Transverse colon (tissue), 4 donors: ENCODE measurements at regions of chr1 and their contacts with region 1.

Region 1: DNA sequence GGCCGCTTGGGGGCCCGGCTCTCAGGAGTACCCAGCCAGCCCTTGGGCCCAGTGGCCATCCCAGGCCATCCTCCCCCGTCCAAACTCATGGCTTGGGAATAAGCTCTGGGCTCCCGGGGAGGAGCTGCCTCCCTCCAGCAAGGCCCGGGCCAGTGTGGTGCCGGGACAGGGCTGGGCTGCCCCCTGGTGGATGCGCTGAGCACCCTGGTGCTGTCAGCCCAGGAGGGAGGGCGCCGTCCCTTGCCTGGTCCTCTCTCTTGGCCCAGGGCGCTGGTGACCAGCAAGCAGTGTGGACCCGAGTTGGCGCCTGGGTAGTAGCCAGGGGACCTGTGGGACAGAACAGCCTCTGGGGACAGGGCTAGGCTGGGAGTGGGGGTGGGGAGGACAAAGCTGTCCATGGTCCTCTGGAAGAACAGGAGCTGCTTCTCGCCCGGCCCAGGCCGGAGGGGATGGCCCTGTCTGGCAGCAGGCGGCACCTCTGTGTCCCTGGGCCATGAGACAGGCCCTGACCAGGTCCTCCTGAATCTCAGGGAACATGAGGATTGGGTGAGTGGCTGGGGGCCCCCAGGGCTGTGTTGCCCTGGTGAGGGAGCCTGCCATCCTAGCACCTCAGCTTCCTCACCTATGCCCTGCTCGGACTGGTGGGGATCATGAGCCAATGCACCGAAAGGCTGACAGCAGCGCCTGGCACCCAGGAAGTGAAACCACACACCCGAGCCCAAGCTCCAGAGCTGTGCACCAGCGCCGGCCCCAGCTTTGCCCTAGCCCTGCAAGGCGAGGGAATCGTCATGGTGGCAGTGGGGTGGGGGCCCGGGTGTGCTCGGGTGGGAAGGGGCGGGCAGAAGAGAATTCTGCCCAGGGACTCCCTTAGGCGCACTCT is 9.4 kb downstream of the MORN1 start:
- DNase-seq: peak; percentile 82
- H3K4me3 ChIP-seq: no peak overlapping the region
- H3K27ac ChIP-seq: no peak overlapping the region
- H3K4me1 ChIP-seq: peaks cover 0 to 10% (median 2%) of the 10 kb centered on the region in 4 donors
- H3K27me3 ChIP-seq: no peaks in the 10 kb centered on the region
- CTCF ChIP-seq: peak; percentile 83 to 96 (median 92)
- EP300 ChIP-seq: no peak
- POLR2A ChIP-seq: no peak

Region 2: GRCh38 chr1:2330511-2331199 is 51.3 kb before region 1 on chr1:
- in situ Hi-C with region 1: no loop called
- intact Hi-C with region 1: loop called (anchors 5 kb)
- DNase-seq: peak; percentile 33
- H3K4me3 ChIP-seq: no peak overlapping the region
- H3K27ac ChIP-seq: peak overlapping the region; percentile 46 to 63 (median 56)
- H3K4me1 ChIP-seq: peaks cover 5 to 14% (median 9%) of the 10 kb centered on the region in 4 donors
- H3K27me3 ChIP-seq: no peaks in the 10 kb centered on the region
- CTCF ChIP-seq: no peak
- EP300 ChIP-seq: no peak
- POLR2A ChIP-seq: no peak

Region 3: DNA sequence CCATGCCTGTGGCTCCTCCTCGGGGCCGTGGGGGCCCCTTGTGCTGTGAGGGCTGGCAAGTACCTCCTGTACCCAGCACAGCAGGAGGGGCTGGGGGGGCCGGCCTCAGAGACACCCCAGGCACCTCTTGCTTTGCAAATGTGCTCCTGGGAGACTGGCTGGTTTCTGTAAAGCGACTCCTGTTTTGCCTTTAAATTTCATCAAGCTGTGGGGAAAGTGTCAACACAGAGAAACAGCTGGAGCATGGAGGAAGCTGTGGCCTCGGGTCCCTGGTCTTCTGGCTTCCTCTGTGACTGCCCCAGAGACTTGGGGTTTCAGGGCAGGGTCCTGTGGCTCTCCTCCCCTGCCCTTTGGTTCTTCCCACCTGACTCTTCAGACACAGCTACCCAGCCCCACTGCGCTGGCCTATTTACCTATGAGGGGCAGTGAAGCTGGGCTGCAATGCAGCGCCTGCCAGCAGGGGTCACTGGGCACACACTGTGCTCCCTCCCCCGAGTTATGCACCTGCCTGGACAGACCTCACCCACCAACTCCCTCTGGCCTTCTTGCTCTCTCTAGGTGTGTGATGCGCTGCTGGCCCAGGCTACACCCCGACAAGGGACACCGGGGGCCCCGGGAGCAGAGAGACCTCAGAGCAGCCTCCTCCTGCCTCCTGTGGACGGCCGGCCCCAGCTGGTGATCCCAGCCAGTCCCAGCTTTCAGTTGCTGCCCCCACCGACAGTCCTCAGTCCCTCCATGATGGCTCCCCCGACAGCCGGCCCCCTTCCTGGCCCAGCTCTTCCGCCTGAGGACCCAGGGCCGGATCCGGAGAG is 48.0 kb after region 1 on chr1:
- in situ Hi-C with region 1: no loop called
- intact Hi-C with region 1: no loop called
- DNase-seq: no peak
- H3K4me3 ChIP-seq: no peak overlapping the region
- H3K27ac ChIP-seq: no peak overlapping the region
- H3K4me1 ChIP-seq: no peaks in the 10 kb centered on the region
- H3K27me3 ChIP-seq: peaks cover 36% of the 10 kb centered on the region
- CTCF ChIP-seq: peak in 2 of 5 experiments; percentile 15 to 30
- EP300 ChIP-seq: no peak
- POLR2A ChIP-seq: no peak